HepG2 (cell line): ENCODE measurements at regions of chr11 and their contacts with region 1.

Region 1: GRCh38 chr11:72040726-72041441 is 39.5 kb downstream of the NUMA1 start:
- DNase-seq: peak; percentile 88
- ATAC-seq: peak; percentile 85
- H3K4me3 ChIP-seq: peak overlapping the region; percentile 56 to 77 (median 62)
- H3K27ac ChIP-seq: peak overlapping the region; percentile 86
- H3K4me1 ChIP-seq: peaks cover 54% of the 10 kb centered on the region
- H3K27me3 ChIP-seq: no peaks in the 10 kb centered on the region; a peak in 1 of 5 replicates
- CTCF ChIP-seq: peak; percentile 28; the same call in 1 of the 2 replicates
- EP300 ChIP-seq: no peak
- POLR2A ChIP-seq: peak in 1 of 2 experiments; percentile 44; a peak in 2 of 4 replicates
- RAD21 ChIP-seq: no peak

Region 2: DNA sequence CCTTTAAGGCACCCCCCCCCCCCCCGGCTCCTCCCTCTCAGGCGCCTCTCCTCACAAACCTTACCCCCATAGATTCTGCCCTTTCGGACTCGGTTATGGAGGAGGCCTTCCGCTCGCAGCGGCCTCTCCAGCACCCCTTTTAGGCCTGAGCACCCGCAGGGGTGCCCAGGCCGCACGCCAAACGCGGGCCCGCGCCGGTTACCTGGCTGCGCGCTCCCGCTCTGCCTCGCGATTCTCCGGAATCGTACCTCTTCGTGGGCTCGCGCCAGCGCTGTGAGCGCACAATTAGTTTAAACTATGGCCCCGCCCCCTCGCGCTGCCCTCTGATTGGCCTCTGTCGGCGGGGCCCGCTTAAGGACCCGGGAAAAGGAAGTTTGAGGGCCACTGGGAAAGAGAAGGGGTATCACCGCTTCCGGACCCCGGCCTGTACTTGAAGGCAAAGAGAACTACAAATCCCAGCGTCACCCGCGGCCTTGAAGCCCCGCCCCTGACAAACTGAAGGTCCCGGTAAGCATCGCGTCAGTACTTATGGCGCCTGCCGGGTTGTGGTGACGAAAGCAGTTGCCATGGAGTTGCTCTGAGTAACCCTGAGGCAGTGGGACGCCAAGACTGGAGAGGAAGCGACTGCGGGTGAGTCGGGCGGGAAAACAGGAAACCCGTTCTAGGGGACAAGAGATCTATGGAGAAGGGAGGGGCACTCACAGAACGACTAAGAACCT is 39.5 kb after region 1 on chr11 and contains the starts of genes LRRC51 and NUMA1:
- CTCF ChIA-PET with region 1: no interaction called
- POLR2A ChIA-PET with region 1: interaction called, 18 read pairs
- in situ Hi-C with region 1: no loop called
- intact Hi-C with region 1: loop called (anchors 1 kb)
- DNase-seq: peak; percentile 99
- ATAC-seq: peak; percentile 97
- H3K4me3 ChIP-seq: peak within 1 kb of the TSS; percentile 71 to 92 (median 83)
- H3K27ac ChIP-seq: peak within 1 kb of the TSS; percentile 86
- H3K4me1 ChIP-seq: peaks cover 24% of the 10 kb centered on the region
- H3K27me3 ChIP-seq: no peaks in the 10 kb centered on the region; a peak in 1 of 5 replicates
- CTCF ChIP-seq: no peak
- EP300 ChIP-seq: 0 out of 4 replicates have a peak, but pooled peaks have one; percentile 8 to 20
- POLR2A ChIP-seq: peak; percentile 58 to 74; a peak in 2 of 4 replicates
- RAD21 ChIP-seq: peak; percentile 8; the same call in 1 of the 2 replicates
- total RNA-seq, gene LRRC51: 6.0 and 6.4 TPM in 2 replicates
- total RNA-seq, gene NUMA1: 60.2 and 67.7 TPM in 2 replicates

Region 3: GRCh38 chr11:72112321-72113219 is 71.7 kb after region 1 on chr11 and contains the start of gene ANAPC15:
- CTCF ChIA-PET with region 1: no interaction called
- POLR2A ChIA-PET with region 1: interaction called, 10 read pairs
- in situ Hi-C with region 1: no loop called
- intact Hi-C with region 1: no loop called
- DNase-seq: peak; percentile 99
- ATAC-seq: peak; percentile 95
- H3K4me3 ChIP-seq: peak within 1 kb of the TSS; percentile 55 to 74 (median 73)
- H3K27ac ChIP-seq: peak within 1 kb of the TSS; percentile 92
- H3K4me1 ChIP-seq: peaks cover 16% of the 10 kb centered on the region
- H3K27me3 ChIP-seq: peaks cover 0 to 9% of the 10 kb centered on the region in 2 experiments; a peak in 1 of 5 replicates
- CTCF ChIP-seq: no peak
- EP300 ChIP-seq: 0 out of 4 replicates have a peak, but pooled peaks of 1 of the 2 experiments have one; percentile 17
- POLR2A ChIP-seq: peak; percentile 88 to 98
- RAD21 ChIP-seq: no peak; the same call in 1 of the 2 replicates
- total RNA-seq, gene ANAPC15: 25.2 and 25.7 TPM in 2 replicates